ENCODE measurements at regions of chrX and their contacts with region 1.

Region 1: GRCh38 chrX:118847676-118848075 is 24.1 kb downstream of the ZCCHC12 start:
- DNase-seq: no peak
- H3K4me3 ChIP-seq: no peak overlapping the region
- H3K27ac ChIP-seq: no peak overlapping the region
- H3K4me1 ChIP-seq: no peaks in the 10 kb centered on the region
- H3K27me3 ChIP-seq: no peaks in the 10 kb centered on the region
- CTCF ChIP-seq: peak in 2 of 3 experiments; percentile 37 to 42; a peak in 2 of 4 replicates
- EP300 ChIP-seq: no peak
- POLR2A ChIP-seq: no peak
- RAD21 ChIP-seq: peak; percentile 74 to 76

Region 2: DNA sequence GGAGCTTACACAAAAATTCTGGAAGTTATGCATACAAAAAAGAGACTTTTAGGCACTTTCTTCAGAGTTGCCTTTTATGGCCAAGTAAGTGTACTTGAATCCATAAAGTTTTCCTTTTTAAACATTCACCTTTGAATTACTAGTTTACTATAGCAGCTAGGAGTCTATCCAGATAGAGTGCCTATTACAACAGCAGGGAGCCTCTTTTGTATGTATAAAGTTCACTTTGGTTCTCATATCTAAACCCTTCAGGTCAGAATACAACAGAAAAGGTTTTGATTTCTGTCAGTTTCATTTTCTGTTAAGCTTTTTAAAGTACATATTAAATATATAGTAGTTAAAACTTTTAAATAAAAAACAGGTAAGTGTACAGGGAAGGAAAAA is 171.7 kb before region 1 on chrX:
- CTCF ChIA-PET with region 1: no interaction called
- POLR2A ChIA-PET with region 1: no interaction called
- DNase-seq: no peak
- H3K4me3 ChIP-seq: no peak overlapping the region
- H3K27ac ChIP-seq: no peak overlapping the region
- H3K4me1 ChIP-seq: no peaks in the 10 kb centered on the region
- H3K27me3 ChIP-seq: no peaks in the 10 kb centered on the region
- CTCF ChIP-seq: no peak
- EP300 ChIP-seq: no peak
- POLR2A ChIP-seq: no peak
- RAD21 ChIP-seq: no peak

Region 3: DNA sequence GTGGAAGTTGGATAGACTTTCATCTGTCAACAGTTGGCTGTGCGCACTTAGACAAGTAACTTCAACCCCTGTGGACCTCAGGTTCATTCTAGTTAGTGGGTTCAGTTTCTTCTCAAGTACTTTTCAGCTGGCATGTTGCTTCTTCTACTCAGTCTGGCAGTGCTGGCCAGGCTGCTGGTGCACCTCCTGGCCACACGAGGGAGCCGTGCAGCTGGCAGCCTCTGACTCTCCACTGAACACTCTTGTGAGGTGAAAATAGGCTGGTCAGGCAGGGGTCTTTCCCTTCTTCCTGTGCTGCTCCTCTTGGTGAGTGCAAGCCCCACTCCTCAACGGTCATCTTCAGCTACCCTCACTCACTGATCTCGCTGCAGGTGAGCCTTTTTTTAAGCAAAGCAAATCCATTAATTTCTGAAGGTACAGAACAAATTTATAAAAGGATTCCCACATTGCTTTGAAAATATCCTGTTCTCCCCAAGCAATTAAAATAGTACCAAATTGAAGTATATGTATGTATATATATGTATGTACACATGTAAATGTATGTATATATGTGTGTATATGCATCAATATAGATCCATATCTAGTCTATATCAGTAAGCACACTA is 157.3 kb after region 1 on chrX:
- CTCF ChIA-PET with region 1: interaction called, 14 read pairs
- POLR2A ChIA-PET with region 1: no interaction called
- DNase-seq: peak in 1 of 2 experiments; percentile 62
- H3K4me3 ChIP-seq: no peak overlapping the region
- H3K27ac ChIP-seq: no peak overlapping the region
- H3K4me1 ChIP-seq: no peaks in the 10 kb centered on the region
- H3K27me3 ChIP-seq: no peaks in the 10 kb centered on the region
- CTCF ChIP-seq: peak; percentile 71 to 88 (median 85)
- EP300 ChIP-seq: no peak
- POLR2A ChIP-seq: no peak
- RAD21 ChIP-seq: peak; percentile 63 to 69

Region 4: GRCh38 chrX:119067023-119067739 is 219.5 kb after region 1 on chrX:
- CTCF ChIA-PET with region 1: interaction called, 30 read pairs
- POLR2A ChIA-PET with region 1: no interaction called
- DNase-seq: peak in 1 of 2 experiments; percentile 59
- H3K4me3 ChIP-seq: no peak overlapping the region
- H3K27ac ChIP-seq: no peak overlapping the region
- H3K4me1 ChIP-seq: peaks cover 0 to 3% (median 0%) of the 10 kb centered on the region in 4 experiments; a peak in 2 of 7 replicates
- H3K27me3 ChIP-seq: no peaks in the 10 kb centered on the region
- CTCF ChIP-seq: peak; percentile 50 to 68 (median 57)
- EP300 ChIP-seq: no peak
- POLR2A ChIP-seq: no peak
- RAD21 ChIP-seq: peak; percentile 76 to 84